ENCODE measurements at regions of chr18 and their contacts with region 1.

Region 1: GRCh38 chr18:54671291-54671881 is 80.3 kb downstream of the DYNAP start:
- DNase-seq: peak; percentile 10 to 34 (median 16)
- ATAC-seq: no peak
- H3K4me3 ChIP-seq: no peak overlapping the region
- H3K27ac ChIP-seq: no peak overlapping the region
- H3K4me1 ChIP-seq: no peaks in the 10 kb centered on the region
- H3K27me3 ChIP-seq: no peaks in the 10 kb centered on the region
- CTCF ChIP-seq: peak in 2 of 3 experiments; percentile 10 to 58; a peak in 3 of 6 replicates
- EP300 ChIP-seq: no peak
- POLR2A ChIP-seq: no peak
- RAD21 ChIP-seq: peak; percentile 66 to 76

Region 2: GRCh38 chr18:54444319-54444914 is 227.0 kb before region 1 on chr18:
- CTCF ChIA-PET with region 1: interaction called, 3 read pairs
- POLR2A ChIA-PET with region 1: no interaction called
- in situ Hi-C with region 1: no loop called
- intact Hi-C with region 1: loop called (anchors 1 kb)
- DNase-seq: peak; percentile 26 to 50 (median 29)
- ATAC-seq: peak; percentile 81
- H3K4me3 ChIP-seq: no peak overlapping the region
- H3K27ac ChIP-seq: no peak overlapping the region
- H3K4me1 ChIP-seq: no peaks in the 10 kb centered on the region
- H3K27me3 ChIP-seq: no peaks in the 10 kb centered on the region; a peak in 1 of 5 replicates
- CTCF ChIP-seq: peak; percentile 57 to 69 (median 59); a peak in 5 of 6 replicates
- EP300 ChIP-seq: no peak
- POLR2A ChIP-seq: no peak
- RAD21 ChIP-seq: peak; percentile 74

Region 3: DNA sequence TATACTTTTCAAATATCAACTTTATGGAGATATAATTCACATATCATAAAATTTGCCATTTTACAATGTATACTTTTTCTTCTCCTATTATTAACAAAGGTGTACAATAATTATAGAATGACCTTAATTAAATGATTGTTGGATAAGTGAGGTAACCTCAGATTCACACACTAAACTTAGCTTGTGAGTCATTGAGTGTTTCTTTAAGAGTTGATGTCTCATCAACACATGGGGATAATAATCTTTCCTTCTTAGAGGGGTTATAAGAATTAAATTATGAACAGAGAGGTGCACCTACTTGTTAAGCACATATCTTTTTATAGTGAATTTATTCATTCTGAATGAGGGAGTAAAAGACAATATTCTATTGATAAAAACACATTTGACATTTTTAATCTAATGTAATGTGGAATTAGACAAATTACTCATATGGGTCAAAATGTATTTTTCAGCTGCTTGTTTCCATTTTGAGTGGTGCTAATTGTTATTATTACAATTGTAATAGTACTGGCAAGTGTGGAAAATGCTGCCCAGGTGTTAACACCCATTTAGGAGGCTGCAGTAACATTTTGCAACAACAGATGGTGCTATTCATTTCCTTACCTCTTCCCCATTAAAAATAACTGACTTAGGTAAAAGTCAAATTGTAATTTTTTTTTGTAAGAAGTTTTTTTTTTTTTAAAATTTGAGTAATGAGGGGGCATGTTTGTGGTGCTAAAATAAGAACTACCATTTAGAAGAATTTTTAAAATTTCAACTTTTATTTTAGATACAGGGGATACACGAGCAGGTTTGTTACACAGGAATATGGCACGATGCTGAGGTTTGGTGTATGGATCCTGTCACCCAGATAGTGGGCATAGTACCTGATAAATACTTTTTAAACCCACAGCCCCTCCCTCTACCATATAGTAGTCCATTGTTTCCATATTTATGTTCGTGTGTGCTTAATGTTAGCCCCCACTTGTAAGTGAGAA is 112.5 kb before region 1 on chr18:
- CTCF ChIA-PET with region 1: interaction called, 3 read pairs
- POLR2A ChIA-PET with region 1: no interaction called
- in situ Hi-C with region 1: no loop called
- intact Hi-C with region 1: loop called (anchors 5 kb)
- DNase-seq: peak; percentile 9 to 30 (median 22)
- ATAC-seq: no peak
- H3K4me3 ChIP-seq: no peak overlapping the region
- H3K27ac ChIP-seq: no peak overlapping the region
- H3K4me1 ChIP-seq: no peaks in the 10 kb centered on the region
- H3K27me3 ChIP-seq: no peaks in the 10 kb centered on the region
- CTCF ChIP-seq: peak; percentile 34 to 62 (median 47); a peak in 3 of 6 replicates
- EP300 ChIP-seq: no peak
- POLR2A ChIP-seq: no peak
- RAD21 ChIP-seq: peak; percentile 60 to 79

Measured in K562 (cell line).